Aorta (tissue), 5 donors: ENCODE measurements at regions of chr13 and their contacts with region 1.

Region 1: GRCh38 chr13:36919833-36920615 is at the start of gene SMAD9:
- DNase-seq: peak; percentile 87 to 95
- ATAC-seq: peak; percentile 79
- H3K4me3 ChIP-seq: peak within 1 kb of the TSS; percentile 98 to 99
- H3K27ac ChIP-seq: peak within 1 kb of the TSS; percentile 84 to 95
- H3K4me1 ChIP-seq: peaks cover 2 to 3% of the 10 kb centered on the region in 2 donors
- H3K27me3 ChIP-seq: no peaks in the 10 kb centered on the region
- total RNA-seq, gene SMAD9: 48.9 to 50.8 TPM

Region 2: DNA sequence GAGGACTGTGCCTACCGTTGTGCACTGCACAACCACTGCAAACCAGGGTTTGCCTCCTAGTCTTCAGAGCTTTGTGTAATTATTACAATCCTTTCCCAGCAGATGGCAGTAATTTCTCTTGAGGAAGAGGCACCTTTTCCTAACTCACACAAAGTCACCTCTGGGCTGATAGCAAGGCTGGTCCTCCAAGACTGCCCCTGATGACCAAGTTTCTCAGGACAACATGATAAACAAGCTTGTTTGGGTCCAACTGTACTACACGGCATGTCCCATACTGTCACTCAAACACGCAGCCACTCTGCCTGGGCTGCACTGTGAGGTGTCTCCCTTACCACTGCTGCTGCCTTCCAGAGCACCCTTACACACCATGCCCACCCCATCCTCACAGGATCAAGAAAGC is 61.7 kb before region 1 on chr13:
- intact Hi-C with region 1: loop called in 1 of 2 experiments (anchors 5 kb)
- DNase-seq: no peak
- ATAC-seq: peak; percentile 68
- H3K4me3 ChIP-seq: no peak overlapping the region
- H3K27ac ChIP-seq: no peak overlapping the region
- H3K4me1 ChIP-seq: no peaks in the 10 kb centered on the region
- H3K27me3 ChIP-seq: no peaks in the 10 kb centered on the region

Region 3: GRCh38 chr13:36872621-36873020 is 47.4 kb before region 1 on chr13:
- intact Hi-C with region 1: loop called in 1 of 2 experiments (anchors 5 kb)
- DNase-seq: no peak
- ATAC-seq: no peak
- H3K4me3 ChIP-seq: no peak overlapping the region
- H3K27ac ChIP-seq: no peak overlapping the region
- H3K4me1 ChIP-seq: no peaks in the 10 kb centered on the region
- H3K27me3 ChIP-seq: no peaks in the 10 kb centered on the region

Region 4: DNA sequence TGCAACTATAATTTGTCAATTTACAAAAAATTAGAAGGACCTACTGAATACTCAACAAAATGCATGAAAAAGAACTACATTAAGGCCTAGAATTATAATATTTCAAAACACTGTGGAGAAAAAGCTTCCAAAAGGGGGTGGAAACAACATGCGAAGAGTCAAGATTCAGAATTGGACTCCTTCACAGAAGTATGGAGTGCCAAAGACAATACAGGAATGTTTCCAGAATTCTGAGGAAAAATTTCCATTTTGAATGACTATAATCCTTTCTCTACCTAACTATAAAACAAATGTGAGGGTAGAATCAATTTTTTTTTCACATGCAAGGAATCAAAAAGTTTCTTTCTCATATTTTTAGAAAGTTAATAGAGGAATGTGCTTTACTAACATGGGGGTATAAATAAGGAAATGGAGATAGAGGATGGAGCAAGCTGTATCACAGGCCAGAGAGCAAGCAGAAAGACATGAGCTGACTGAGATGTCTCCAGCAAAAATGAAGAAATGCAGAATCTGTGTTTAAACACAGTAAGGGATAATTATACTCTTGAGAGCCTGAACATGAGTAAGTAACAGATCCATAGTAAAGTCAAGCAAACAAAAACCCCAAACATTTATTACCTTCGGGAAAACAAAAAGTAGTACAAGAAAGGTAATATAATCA is 39.6 kb after region 1 on chr13:
- intact Hi-C with region 1: loop called in 1 of 2 experiments (anchors 5 kb)
- DNase-seq: no peak
- ATAC-seq: peak; percentile 80
- H3K4me3 ChIP-seq: no peak overlapping the region
- H3K27ac ChIP-seq: no peak overlapping the region
- H3K4me1 ChIP-seq: no peaks in the 10 kb centered on the region
- H3K27me3 ChIP-seq: no peaks in the 10 kb centered on the region

Region 5: DNA sequence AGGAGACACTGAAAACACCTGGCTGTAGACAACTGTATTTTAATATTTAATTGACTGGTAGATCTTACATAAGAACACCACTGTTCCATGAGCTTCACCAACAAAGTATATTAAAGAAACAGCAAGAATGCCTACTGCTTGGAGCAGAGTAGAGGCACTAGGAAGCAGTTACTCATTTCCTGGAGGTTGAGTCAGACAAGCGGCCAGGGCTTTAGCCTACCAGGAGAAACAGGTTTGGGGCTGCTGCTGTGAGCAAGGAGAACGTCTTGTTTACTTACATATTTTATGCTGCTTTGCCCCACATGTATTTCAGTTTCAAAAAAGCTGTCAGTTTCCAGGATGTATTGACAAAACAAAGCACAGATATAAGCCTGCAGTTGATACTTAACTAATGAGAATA is 45.7 kb after region 1 on chr13:
- intact Hi-C with region 1: loop called in 1 of 2 experiments (anchors 5 kb)
- DNase-seq: no peak
- ATAC-seq: no peak
- H3K4me3 ChIP-seq: no peak overlapping the region
- H3K27ac ChIP-seq: no peak overlapping the region
- H3K4me1 ChIP-seq: no peaks in the 10 kb centered on the region
- H3K27me3 ChIP-seq: no peaks in the 10 kb centered on the region

Region 6: GRCh38 chr13:37127691-37128241 is 207.7 kb after region 1 on chr13:
- intact Hi-C with region 1: no loop called
- DNase-seq: peak in 1 of 2 donors; percentile 52
- ATAC-seq: peak; percentile 91
- H3K4me3 ChIP-seq: peak overlapping the region in 1 of 2 donors; percentile 31
- H3K27ac ChIP-seq: peak overlapping the region in 1 of 2 donors; percentile 82
- H3K4me1 ChIP-seq: peaks cover 0 to 2% of the 10 kb centered on the region in 2 donors
- H3K27me3 ChIP-seq: no peaks in the 10 kb centered on the region